Activated CD4-positive, alpha-beta T cell treated with anti-CD3 and anti-CD28 coated beads for 36 hours (primary cell): ENCODE measurements at regions of chr7 and their contacts with region 1.

Region 1: DNA sequence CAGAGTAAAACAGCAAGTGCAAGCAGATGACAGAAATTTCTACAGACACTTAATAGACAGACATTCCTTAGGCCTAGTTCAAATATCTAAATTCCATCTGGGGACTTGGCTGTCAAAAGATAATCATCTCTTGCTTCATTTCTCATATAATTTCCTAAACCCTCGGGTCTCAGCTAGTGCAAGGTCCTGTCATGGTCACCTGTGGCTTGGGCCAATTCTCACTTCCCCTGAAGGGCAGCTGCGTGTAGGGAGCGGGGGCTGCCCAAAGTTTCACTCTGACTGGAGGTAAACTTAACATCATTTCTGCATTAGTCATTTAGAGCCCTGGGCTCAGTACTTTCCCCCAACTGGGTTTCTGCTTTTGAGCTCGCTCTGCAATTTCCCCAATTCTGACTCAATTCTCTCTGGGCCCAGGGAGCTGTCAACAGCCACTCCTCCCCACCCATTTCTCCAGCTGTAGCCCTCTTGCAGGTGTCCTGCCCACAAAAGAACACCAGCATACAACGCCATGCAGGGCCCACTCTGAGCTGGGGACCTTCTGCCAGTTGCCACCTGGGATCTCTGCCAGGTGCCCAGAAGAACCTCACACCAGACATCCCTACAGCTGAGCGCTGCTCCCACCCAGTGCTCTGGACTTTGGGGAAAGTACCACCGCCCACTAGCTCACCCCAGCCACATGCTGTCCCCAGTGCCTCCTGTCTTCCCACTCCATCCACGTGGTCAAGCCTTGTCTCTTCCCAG is 38.0 kb downstream of the VOPP1 start:
- DNase-seq: peak; percentile 88
- ATAC-seq: peak; percentile 70
- H3K4me3 Mint-ChIP-seq: peak overlapping the region; percentile 37
- H3K27ac Mint-ChIP-seq: peak overlapping the region; percentile 93
- H3K4me1 Mint-ChIP-seq: peaks cover 97% of the 10 kb centered on the region
- H3K27me3 Mint-ChIP-seq: no peaks in the 10 kb centered on the region

Region 2: DNA sequence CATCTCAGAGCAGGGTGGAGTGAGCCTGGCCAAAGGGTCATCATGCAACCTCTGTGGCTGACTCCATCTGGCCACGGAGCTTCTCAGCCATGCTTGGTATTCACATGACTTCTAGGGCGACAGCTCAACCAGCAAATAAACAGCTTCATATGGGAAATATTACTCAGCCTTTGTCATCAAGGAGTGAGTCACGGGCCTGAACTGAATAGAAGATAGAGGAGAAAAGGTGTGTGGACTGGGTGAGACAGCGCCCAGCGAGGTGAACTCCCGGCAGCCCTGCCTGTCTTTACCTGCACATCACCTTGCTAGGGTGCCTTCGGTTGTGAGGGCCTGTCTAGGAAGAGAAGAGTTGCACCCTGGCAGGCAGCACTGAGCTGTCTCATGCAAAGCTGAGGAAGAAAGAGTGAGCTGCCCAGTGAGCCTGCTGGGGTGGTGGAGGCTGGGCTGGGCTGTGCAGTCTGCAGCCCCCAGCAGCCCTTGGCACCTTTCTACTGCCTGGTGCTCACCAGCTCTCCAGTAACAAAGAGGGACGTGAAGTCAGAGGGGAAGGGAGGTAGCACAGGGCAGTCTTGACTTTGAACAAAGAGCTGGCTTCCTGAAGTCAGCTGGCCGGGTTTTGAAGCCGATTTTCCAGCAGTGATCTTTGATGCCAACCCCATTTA is 401.3 kb before region 1 on chr7:
- CTCF ChIA-PET with region 1: no interaction called
- POLR2A ChIA-PET with region 1: no interaction called
- intact Hi-C with region 1: loop called in 1 of 2 experiments (anchors 5 kb)
- DNase-seq: peak; percentile 63
- ATAC-seq: peak; percentile 82
- H3K4me3 Mint-ChIP-seq: no peak overlapping the region
- H3K27ac Mint-ChIP-seq: peak overlapping the region; percentile 72
- H3K4me1 Mint-ChIP-seq: peaks cover 38% of the 10 kb centered on the region
- H3K27me3 Mint-ChIP-seq: peaks cover 16% of the 10 kb centered on the region

Region 3: DNA sequence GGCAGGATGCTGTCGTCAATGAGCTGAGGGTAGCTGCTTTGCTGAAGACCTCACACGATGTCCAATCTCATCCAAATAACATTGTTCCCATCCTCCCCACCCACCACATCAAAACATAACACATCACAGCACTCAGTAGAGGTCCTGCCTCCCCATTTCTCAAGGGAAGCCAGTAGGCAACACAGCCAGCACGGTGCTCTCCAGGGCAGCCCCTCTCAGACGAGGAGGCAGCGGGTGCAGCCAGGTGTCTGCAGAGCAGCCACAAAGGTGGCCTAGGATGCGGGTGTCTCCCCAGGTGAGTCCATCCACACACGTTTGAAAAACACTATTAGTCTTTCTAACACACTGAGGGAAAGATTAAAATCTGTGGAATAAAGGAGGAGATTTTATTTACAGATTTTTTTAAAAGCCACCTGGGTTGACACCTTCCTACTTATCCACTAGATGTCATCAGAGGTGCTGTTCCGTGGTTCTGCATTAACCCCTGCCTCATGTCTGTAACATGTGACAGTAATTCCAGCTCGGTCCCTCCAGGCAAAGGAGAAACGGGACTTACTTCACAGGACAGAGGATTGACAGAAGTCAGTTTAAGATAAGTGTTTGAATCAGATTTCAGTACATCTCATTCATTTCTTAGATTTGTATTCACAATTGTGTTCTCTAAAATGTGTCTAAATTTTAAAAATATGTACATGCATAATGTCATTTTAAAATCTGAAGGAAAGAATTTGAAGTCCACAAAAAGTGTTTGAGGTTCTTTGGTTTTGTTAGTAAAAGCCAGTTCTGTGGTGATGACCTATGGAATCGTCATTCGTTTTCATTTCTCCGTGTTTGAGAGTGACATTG is 101.2 kb before region 1 on chr7:
- CTCF ChIA-PET with region 1: interaction called, 3 read pairs
- POLR2A ChIA-PET with region 1: no interaction called
- intact Hi-C with region 1: loop called in 1 of 2 experiments (anchors 5 kb)
- DNase-seq: peak; percentile 45
- ATAC-seq: peak; percentile 79
- H3K4me3 Mint-ChIP-seq: no peak overlapping the region
- H3K27ac Mint-ChIP-seq: peak overlapping the region; percentile 43
- H3K4me1 Mint-ChIP-seq: peaks cover 33% of the 10 kb centered on the region
- H3K27me3 Mint-ChIP-seq: no peaks in the 10 kb centered on the region

Region 4: DNA sequence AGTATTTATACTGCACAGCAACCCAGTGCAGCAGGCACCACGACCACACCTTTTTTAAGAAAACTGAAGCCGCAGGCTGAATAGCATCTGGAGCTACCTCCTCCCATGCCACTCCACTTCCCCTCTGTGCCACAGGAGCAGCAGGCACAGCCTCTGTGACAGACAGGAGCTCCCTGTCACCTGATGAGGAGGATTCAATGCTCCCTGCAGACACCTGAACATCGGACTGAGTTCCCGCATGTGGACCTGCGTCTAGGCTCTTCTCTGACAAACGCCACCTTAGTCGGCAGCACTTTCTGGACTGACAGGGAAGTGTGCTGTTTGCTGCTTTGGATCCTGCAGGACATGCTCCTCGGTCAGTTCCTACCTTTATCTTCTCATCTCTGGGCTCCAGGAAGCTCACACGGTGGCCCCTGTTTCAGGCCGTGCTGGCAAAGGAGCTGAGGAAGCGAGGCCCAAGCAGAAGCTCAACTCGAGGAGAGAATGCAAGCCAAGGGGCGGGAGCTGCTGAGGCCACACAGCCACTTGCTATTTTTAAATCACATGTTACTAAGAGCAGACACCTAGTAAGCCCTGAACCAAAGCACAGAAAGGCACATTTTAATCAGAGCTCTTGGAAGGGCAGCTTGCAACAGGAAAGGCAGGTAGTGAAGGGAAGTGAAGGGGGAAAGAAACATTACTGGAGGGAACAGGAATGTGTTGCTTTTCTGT is 18.6 kb before region 1 on chr7:
- CTCF ChIA-PET with region 1: interaction called, 6 read pairs
- POLR2A ChIA-PET with region 1: interaction called, 8 read pairs
- intact Hi-C with region 1: loop called (anchors 1 kb)
- DNase-seq: peak; percentile 50
- ATAC-seq: peak; percentile 25
- H3K4me3 Mint-ChIP-seq: peak overlapping the region; percentile 2
- H3K27ac Mint-ChIP-seq: peak overlapping the region; percentile 69
- H3K4me1 Mint-ChIP-seq: peaks cover 66% of the 10 kb centered on the region
- H3K27me3 Mint-ChIP-seq: no peaks in the 10 kb centered on the region

Region 5: DNA sequence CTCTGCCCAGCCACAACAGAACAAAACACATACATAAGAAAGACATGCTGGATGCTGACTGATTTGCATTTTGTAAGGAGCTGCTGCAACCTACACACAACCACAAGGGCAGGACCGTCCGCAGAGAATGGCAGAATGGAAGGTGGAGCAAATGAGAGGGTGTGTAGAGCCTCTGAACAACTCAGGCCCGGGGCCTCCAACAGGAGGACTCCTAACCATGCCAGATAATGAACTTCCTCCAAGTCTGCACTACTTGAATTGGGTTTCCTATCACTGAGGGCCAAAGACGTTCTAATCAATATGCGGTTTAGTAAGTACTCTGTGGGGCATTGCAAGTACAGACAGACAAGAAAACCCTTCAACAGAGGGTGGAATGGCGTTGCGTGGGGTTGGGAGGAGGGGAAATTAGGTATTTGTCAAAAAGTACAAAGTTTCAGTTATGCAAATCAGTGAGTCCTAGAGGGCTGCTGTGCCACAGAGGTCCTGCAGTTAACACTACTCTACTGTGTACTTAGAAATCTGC is 23.4 kb after region 1 on chr7:
- CTCF ChIA-PET with region 1: interaction called, 9 read pairs
- POLR2A ChIA-PET with region 1: interaction called, 25 read pairs
- intact Hi-C with region 1: loop called (anchors 1 to 2 kb)
- DNase-seq: peak; percentile 61
- ATAC-seq: peak; percentile 69
- H3K4me3 Mint-ChIP-seq: peak overlapping the region; percentile 22
- H3K27ac Mint-ChIP-seq: peak overlapping the region; percentile 79
- H3K4me1 Mint-ChIP-seq: peaks cover 91% of the 10 kb centered on the region
- H3K27me3 Mint-ChIP-seq: no peaks in the 10 kb centered on the region

Region 6: GRCh38 chr7:55588379-55588699 is 54.0 kb after region 1 on chr7:
- CTCF ChIA-PET with region 1: no interaction called
- POLR2A ChIA-PET with region 1: no interaction called
- intact Hi-C with region 1: no loop called
- DNase-seq: no peak
- ATAC-seq: peak; percentile 30
- H3K4me3 Mint-ChIP-seq: no peak overlapping the region
- H3K27ac Mint-ChIP-seq: no peak overlapping the region
- H3K4me1 Mint-ChIP-seq: peaks cover 4% of the 10 kb centered on the region
- H3K27me3 Mint-ChIP-seq: no peaks in the 10 kb centered on the region

Region 7: GRCh38 chr7:55784151-55784550 is 249.8 kb after region 1 on chr7:
- CTCF ChIA-PET with region 1: no interaction called
- POLR2A ChIA-PET with region 1: no interaction called
- intact Hi-C with region 1: no loop called
- DNase-seq: no peak
- ATAC-seq: no peak
- H3K4me3 Mint-ChIP-seq: no peak overlapping the region
- H3K27ac Mint-ChIP-seq: no peak overlapping the region
- H3K4me1 Mint-ChIP-seq: no peaks in the 10 kb centered on the region
- H3K27me3 Mint-ChIP-seq: no peaks in the 10 kb centered on the region